Mammary epithelial cell (primary cell): ENCODE measurements at regions of chr14 and their contacts with region 1.

Region 1: DNA sequence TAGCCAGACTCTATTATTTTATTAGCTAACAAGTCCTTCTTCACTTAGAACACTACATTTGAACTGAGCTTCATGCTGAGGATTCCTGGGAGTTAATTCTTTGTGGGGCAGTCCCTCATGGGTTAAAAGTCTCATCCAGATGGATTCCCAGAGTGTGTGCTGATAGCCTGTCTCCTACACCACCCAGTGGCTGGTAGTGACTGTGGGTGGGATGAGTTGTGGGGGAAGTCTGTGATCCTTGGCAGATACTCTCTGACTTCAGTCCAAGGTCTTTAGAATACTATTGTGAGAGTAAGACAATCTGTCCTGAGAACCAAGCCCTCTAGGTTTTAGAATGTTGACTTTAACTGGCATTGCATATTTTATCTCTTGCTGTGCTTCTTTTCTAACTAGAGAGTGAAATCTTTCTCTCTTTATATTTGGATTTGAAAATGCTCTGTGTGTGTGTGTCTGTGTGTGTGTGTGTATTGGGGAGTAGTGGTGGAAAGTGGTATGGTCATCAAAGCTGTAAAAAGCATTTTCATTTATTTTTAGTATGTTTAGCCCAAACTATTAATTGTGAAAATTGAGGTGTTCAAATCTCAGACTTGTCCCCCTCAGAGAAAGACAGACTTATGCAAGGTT is 37.3 kb downstream of the AKAP6 start:
- DNase-seq: no peak
- H3K4me3 ChIP-seq: no peak overlapping the region
- H3K27ac ChIP-seq: no peak overlapping the region
- H3K4me1 ChIP-seq: peaks cover 24% of the 10 kb centered on the region
- H3K27me3 ChIP-seq: no peaks in the 10 kb centered on the region
- CTCF ChIP-seq: peak; percentile 6 to 24

Region 2: GRCh38 chr14:32345311-32345791 is 21.0 kb before region 1 on chr14:
- CTCF ChIA-PET with region 1: no interaction called
- dilution Hi-C with region 1: no loop called
- in situ Hi-C with region 1: no loop called
- intact Hi-C with region 1: loop called (anchors 2 kb)
- DNase-seq: peak; percentile 74
- H3K4me3 ChIP-seq: no peak overlapping the region
- H3K27ac ChIP-seq: peak overlapping the region; percentile 87
- H3K4me1 ChIP-seq: peaks cover 54% of the 10 kb centered on the region
- H3K27me3 ChIP-seq: no peaks in the 10 kb centered on the region
- CTCF ChIP-seq: peak in 1 of 2 donors; percentile 6

Region 3: DNA sequence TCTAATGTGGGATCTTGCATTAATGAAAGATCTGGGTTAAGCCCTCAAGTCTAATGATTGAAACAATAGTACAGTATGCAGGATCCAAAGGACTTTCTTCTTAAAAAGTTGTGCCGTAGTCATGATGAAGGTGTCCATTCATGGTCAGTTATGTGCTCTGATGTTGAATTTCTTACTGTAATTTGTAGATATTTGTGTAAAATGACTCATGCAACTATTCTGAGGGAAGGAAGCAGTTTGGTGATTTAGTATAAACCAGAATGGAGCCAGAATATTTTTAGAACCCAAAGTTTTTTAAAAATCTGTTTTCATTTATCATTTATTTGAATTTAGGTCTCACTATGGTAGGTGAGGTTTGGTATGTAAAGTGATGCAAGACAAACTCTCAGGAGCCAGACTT is 114.0 kb after region 1 on chr14:
- CTCF ChIA-PET with region 1: no interaction called
- dilution Hi-C with region 1: no loop called
- in situ Hi-C with region 1: no loop called
- intact Hi-C with region 1: no loop called
- DNase-seq: no peak
- H3K4me3 ChIP-seq: no peak overlapping the region
- H3K27ac ChIP-seq: no peak overlapping the region
- H3K4me1 ChIP-seq: peaks cover 13% of the 10 kb centered on the region
- H3K27me3 ChIP-seq: no peaks in the 10 kb centered on the region
- CTCF ChIP-seq: no peak